ENCODE measurements at regions of chr12 and their contacts with region 1.

Region 1: DNA sequence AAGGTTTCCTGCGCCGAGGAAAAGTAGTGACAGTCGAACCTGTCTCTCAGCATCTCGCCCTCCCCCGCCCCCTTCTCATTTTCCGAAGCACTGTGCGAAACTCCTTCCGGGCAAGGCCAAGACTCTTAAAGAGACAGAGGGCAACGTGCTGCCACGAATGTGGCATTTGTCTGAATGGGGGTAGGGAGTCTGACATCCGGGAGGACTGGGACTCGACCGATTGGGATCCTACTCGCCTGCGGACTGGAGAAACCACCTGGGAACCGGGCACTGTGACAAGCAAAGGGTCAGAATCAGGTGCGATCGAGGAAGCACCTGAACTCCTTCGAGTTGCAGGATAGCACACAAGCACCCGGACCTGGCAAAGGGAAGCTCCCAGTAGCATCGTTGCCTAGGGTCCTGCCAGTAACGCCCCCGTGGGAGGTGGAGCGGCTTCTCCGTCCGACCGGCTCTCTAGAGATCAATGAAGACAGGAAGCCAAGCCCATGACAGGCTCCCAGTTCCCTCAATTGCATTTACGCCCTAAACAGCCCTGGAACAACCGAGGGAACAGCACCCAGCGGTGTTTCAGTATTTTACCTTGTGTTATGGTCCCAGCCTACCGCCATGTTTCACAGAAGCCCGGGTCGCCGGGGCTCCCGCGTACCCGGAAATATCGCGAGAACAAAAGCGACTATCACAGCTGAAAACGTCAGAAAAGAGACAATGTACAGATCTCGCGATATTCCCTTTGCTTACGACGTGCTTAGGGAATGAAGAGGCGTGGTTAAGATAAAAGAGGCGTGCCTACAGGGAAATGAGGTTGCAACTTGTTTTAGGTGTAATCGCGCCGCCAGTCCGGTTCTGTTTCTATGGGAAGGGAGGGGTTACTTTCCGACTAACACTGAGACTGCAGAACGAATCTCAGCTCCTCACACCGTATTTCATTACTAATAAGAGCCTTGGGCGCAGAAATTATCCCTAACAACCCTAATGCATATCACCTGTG is at the start of gene ERGIC2:
- DNase-seq: peak; percentile 73
- ATAC-seq: peak; percentile 94
- H3K4me3 Mint-ChIP-seq: peak within 1 kb of the TSS; percentile 94
- H3K27ac Mint-ChIP-seq: peak within 1 kb of the TSS; percentile 94
- H3K4me1 Mint-ChIP-seq: peaks cover 42% of the 10 kb centered on the region
- H3K27me3 Mint-ChIP-seq: no peaks in the 10 kb centered on the region
- CTCF ChIP-seq: no peak
- total RNA-seq, gene ERGIC2: 43.7 TPM in 2 replicates

Region 2: DNA sequence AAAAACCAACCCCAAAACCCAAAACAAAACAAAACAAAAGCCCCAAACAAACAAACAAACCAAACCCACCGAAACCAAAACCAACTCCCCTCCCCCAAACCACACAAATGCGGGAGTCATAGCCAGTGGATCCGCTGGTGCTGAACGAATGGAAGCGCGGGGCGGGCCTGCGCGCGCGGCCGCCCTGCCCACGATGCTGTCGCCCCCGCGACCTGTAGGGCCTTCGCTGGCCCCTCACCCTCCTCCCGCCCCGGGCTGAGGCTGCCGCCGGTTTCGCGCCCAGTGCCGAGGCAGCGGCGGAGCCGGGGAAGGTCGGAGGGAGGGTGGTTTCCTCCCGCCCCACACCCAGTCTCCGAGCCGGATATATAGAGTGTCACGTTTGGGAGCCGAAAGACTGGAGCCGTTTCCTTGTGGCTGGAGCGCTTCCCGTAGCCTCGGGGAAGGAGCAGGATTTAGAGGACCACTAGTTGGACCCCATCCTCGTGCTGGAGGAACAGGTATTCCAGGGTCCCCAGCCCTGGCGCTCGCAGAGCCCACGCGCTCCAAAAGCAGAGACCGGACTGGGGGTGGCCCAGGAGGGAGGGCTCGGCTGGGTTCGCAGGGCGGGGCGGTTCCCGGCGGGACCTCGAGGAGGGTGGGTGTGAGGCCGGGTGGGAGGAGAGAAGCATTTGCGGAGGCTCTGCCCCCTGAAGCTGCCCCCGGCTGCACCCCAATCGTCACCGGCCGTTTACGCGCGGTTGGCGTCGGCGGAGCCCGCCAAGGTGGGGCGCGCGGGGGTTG is 231.7 kb before region 1 on chr12 and contains the start of gene FAR2:
- CTCF ChIA-PET with region 1: no interaction called
- POLR2A ChIA-PET with region 1: no interaction called
- intact Hi-C with region 1: loop called (anchors 5 kb)
- DNase-seq: no peak
- ATAC-seq: peak; percentile 30
- H3K4me3 Mint-ChIP-seq: peak within 1 kb of the TSS; percentile 78
- H3K27ac Mint-ChIP-seq: no peak within 1 kb of the TSS
- H3K4me1 Mint-ChIP-seq: peaks cover 30% of the 10 kb centered on the region
- H3K27me3 Mint-ChIP-seq: peaks cover 21% of the 10 kb centered on the region
- CTCF ChIP-seq: no peak
- total RNA-seq, gene FAR2: not detected in 2 replicates

Region 3: DNA sequence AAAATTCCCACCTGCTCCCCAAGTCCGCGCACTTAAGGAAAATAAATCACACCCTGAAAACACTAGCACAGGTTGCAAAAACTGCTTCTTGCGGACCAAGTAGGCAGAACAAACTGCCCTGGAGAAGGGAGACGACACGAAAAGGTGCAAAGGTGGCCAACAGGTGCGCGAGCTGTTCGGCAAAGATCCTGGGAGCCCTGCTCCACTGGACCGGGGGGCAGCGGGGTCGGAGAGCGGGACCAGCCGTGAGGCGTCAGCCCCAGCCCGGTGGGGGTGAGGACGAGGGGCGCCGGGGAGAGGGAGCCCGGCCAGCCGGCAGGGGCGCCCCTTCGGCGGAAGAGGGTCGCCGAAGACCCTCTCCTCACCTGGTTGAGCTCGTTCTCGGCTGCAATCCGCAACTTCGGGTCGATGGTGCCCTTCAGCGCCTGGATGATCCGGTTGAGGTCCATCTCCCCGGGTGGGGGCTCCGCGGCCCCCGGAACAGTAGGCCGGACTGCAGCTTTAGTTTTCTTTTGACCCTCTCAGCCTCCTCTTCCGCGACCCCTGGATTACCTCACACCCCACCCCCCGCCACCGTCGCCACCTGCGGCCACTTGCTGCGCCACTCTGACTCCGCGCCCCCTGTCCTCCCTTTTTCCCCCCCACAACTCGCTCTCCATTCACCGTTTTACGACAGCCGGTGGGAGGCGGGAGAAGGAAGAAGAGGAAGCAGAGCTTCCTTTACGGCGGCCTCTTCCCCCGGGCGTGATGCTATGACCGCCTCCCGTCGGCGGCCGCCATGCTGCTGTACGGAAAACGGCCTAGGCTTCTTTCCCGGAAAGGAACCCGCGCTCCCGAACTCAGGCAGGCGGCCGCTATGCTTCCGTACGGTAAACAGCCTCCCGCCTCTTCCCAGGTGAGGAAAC is 1314.6 kb after region 1 on chr12 and contains the start of gene IPO8:
- CTCF ChIA-PET with region 1: no interaction called
- POLR2A ChIA-PET with region 1: interaction called, 4 read pairs
- intact Hi-C with region 1: loop called (anchors 1 kb)
- DNase-seq: peak; percentile 73
- ATAC-seq: peak; percentile 90
- H3K4me3 Mint-ChIP-seq: peak within 1 kb of the TSS; percentile 98
- H3K27ac Mint-ChIP-seq: peak within 1 kb of the TSS; percentile 91
- H3K4me1 Mint-ChIP-seq: peaks cover 38% of the 10 kb centered on the region
- H3K27me3 Mint-ChIP-seq: no peaks in the 10 kb centered on the region
- CTCF ChIP-seq: no peak
- total RNA-seq, gene IPO8: 52.0 and 55.4 TPM in 2 replicates

Measured in activated B cell treated with CpG ODN at 0.5 μM for 24 hours (primary cell).